ENCODE measurements at regions of chr2 and their contacts with region 1.

Region 1: GRCh38 chr2:227460070-227460485 is 11.9 kb upstream of the AGFG1 start:
- DNase-seq: peak; percentile 83
- H3K4me3 Mint-ChIP-seq: peak overlapping the region; percentile 51
- H3K27ac Mint-ChIP-seq: peak overlapping the region; percentile 90
- H3K4me1 Mint-ChIP-seq: peaks cover 74% of the 10 kb centered on the region
- H3K27me3 Mint-ChIP-seq: no peaks in the 10 kb centered on the region

Region 2: DNA sequence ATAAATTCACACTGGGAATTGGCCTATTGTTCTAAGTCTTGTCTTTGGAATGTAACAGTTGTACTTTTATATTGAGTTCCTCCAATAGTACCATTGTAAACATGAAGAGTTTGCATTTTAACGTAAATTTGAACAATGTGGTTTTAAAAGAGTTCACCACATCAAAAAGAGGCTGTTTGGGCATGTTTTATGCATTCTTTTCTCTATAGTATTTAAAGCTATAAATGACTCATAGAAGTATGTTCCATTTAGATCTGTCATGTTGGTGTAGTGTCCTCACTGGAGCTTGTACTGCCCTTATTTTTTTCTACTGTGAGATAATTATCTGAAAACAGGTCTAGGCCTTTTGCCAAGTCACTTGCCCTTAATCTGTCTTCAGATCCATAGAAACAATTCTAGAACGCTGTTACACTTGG is 482.3 kb before region 1 on chr2:
- CTCF ChIA-PET with region 1: no interaction called
- POLR2A ChIA-PET with region 1: no interaction called
- intact Hi-C with region 1: no loop called
- DNase-seq: no peak
- H3K4me3 Mint-ChIP-seq: no peak overlapping the region
- H3K27ac Mint-ChIP-seq: no peak overlapping the region
- H3K4me1 Mint-ChIP-seq: peaks cover 5% of the 10 kb centered on the region
- H3K27me3 Mint-ChIP-seq: no peaks in the 10 kb centered on the region

Region 3: DNA sequence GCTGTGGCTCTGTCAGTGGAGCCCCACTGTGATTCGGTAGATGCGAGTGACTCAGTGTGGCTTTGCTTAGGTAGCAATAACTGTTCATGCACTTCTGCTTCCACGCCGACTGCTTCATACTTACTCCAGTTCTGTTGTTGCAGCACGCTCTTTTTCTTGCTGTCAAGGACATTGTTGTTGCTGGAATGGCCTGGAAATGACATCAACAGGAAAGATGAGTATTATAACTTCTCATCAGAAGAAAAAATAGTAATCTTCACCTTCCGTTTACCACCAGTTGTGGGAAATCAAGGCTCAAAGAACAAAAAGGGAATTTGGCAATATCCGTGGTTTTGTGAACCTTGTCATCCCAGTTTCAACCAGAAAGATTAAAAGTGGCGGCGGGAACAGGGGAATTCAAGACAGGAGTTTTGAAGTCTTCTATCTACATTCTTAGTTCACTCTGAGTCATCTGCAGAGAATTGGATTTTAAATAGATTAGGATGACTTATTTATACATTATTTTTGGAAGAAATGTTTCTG is 89.2 kb before region 1 on chr2:
- CTCF ChIA-PET with region 1: no interaction called
- POLR2A ChIA-PET with region 1: interaction called, 7 read pairs
- intact Hi-C with region 1: loop called (anchors 1 kb)
- DNase-seq: peak; percentile 37
- H3K4me3 Mint-ChIP-seq: no peak overlapping the region
- H3K27ac Mint-ChIP-seq: no peak overlapping the region
- H3K4me1 Mint-ChIP-seq: peaks cover 8% of the 10 kb centered on the region
- H3K27me3 Mint-ChIP-seq: no peaks in the 10 kb centered on the region

Region 4: DNA sequence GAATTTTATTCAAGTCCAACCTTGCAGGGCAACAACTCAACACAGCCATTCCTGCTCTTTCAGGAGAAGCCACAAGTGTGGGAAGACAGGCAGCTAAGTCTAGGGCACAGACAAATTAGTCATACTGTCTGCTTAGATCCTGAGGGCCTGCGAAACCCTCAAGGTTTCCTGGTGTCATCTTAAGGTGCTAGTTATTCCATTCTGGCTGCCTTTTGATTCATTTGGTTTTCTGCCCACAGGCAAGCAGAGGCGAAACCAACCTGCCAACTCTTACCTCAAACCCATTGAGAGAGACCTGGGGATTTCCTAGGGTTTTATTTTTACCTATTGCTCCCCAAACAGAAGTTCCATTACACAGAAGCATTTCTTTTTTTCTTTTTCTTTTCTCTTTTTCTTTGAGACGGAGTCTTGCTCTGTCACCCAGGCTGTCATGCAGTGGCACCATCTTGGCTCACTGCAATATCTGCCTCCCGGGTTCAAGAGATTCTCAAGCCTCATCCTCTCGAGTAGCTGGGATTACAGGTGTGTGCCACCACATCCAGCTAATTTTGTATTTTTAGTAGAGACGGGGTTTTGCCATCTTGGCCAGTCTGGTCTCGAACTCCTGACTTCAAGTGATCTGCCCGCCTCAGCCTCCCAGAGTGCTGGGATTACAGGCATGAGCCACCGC is 48.6 kb before region 1 on chr2:
- CTCF ChIA-PET with region 1: interaction called, 17 read pairs
- POLR2A ChIA-PET with region 1: interaction called, 22 read pairs
- intact Hi-C with region 1: loop called (anchors 1 kb)
- DNase-seq: peak; percentile 81
- H3K4me3 Mint-ChIP-seq: peak overlapping the region; percentile 11
- H3K27ac Mint-ChIP-seq: peak overlapping the region; percentile 89
- H3K4me1 Mint-ChIP-seq: peaks cover 57% of the 10 kb centered on the region
- H3K27me3 Mint-ChIP-seq: no peaks in the 10 kb centered on the region

Region 5: GRCh38 chr2:227479865-227480475 is 19.9 kb after region 1 on chr2:
- CTCF ChIA-PET with region 1: interaction called, 6 read pairs
- POLR2A ChIA-PET with region 1: interaction called, 8 read pairs
- intact Hi-C with region 1: loop called (anchors 1 kb)
- DNase-seq: no peak
- H3K4me3 Mint-ChIP-seq: no peak overlapping the region
- H3K27ac Mint-ChIP-seq: peak overlapping the region; percentile 44
- H3K4me1 Mint-ChIP-seq: peaks cover 74% of the 10 kb centered on the region
- H3K27me3 Mint-ChIP-seq: no peaks in the 10 kb centered on the region

Region 6: GRCh38 chr2:227551836-227552235 is 91.8 kb after region 1 on chr2:
- CTCF ChIA-PET with region 1: no interaction called
- POLR2A ChIA-PET with region 1: no interaction called
- intact Hi-C with region 1: no loop called
- DNase-seq: no peak
- H3K4me3 Mint-ChIP-seq: no peak overlapping the region
- H3K27ac Mint-ChIP-seq: no peak overlapping the region
- H3K4me1 Mint-ChIP-seq: peaks cover 5% of the 10 kb centered on the region
- H3K27me3 Mint-ChIP-seq: no peaks in the 10 kb centered on the region

Region 7: GRCh38 chr2:227627769-227628168 is 167.7 kb after region 1 on chr2:
- CTCF ChIA-PET with region 1: no interaction called
- POLR2A ChIA-PET with region 1: no interaction called
- intact Hi-C with region 1: loop called (anchors 5 kb)
- DNase-seq: peak; percentile 58
- H3K4me3 Mint-ChIP-seq: no peak overlapping the region
- H3K27ac Mint-ChIP-seq: no peak overlapping the region
- H3K4me1 Mint-ChIP-seq: no peaks in the 10 kb centered on the region
- H3K27me3 Mint-ChIP-seq: peaks cover 27% of the 10 kb centered on the region